ENCODE measurements at regions of chr5 and their contacts with region 1.

Region 1: GRCh38 chr5:102801371-102801770 is 46.3 kb downstream of the PAM start:
- DNase-seq: peak; percentile 20
- H3K4me3 Mint-ChIP-seq: no peak overlapping the region
- H3K27ac Mint-ChIP-seq: peak overlapping the region; percentile 14
- H3K4me1 Mint-ChIP-seq: peaks cover 49% of the 10 kb centered on the region
- H3K27me3 Mint-ChIP-seq: no peaks in the 10 kb centered on the region

Region 2: DNA sequence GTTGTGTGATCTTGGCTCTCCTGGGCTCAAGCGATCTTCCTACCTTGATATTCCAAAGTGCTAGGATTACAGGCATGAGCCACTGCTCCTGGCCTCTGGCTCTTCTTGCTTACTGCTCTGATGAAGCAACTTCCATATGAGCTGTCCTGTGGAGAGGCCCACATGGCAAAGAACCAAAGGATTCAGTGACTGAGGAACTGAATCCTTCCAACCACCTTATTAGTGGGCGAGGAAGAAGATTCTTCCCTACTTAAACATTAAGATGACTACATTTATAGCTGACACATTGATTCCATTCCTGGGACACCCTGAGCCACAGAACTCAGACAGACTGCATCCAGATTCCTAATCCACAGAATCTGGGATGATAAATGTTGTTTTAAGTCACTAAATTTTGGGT is 488.8 kb before region 1 on chr5:
- intact Hi-C with region 1: no loop called
- DNase-seq: no peak
- H3K4me3 Mint-ChIP-seq: no peak overlapping the region
- H3K27ac Mint-ChIP-seq: no peak overlapping the region
- H3K4me1 Mint-ChIP-seq: no peaks in the 10 kb centered on the region
- H3K27me3 Mint-ChIP-seq: no peaks in the 10 kb centered on the region

Region 3: DNA sequence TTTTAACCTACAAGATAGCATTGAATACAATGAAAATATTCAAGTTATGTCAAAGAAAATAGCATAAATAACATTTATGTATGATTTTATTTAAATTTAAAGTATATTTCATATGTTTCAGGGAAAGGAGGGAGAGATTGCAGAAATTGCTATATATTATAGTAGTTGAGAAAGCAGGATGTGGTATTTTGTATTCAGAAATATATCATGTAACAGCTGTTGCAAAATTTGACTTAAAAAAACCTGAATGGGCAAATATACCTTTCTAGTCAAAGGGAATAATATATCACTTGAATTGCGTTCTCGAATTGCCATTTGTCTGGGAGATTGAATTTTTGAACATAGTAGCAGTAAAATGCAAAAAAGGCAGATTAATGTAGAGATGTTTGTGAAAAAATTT is 34.3 kb after region 1 on chr5:
- intact Hi-C with region 1: loop called (anchors 5 kb)
- DNase-seq: no peak
- H3K4me3 Mint-ChIP-seq: no peak overlapping the region
- H3K27ac Mint-ChIP-seq: no peak overlapping the region
- H3K4me1 Mint-ChIP-seq: peaks cover 42% of the 10 kb centered on the region
- H3K27me3 Mint-ChIP-seq: no peaks in the 10 kb centered on the region

Region 4: DNA sequence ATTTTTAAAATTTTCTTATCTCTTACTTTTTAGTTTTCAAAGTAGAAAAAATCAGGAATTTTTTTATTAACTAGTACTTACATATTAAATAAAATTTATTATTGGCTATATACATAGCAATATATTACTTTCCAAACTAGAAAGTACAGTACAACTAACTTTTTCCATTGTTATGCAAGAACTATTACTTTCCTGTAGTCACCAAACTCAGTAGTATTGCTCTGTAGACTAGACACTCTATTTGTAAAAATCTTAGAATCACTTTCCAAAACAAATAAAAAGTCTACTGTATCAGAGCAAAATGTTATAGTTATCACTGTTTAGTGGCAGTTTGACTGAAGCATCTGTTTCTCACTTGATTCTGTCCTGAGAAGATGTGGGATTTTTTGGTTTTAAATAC is 401.9 kb after region 1 on chr5:
- intact Hi-C with region 1: no loop called
- DNase-seq: no peak
- H3K4me3 Mint-ChIP-seq: no peak overlapping the region
- H3K27ac Mint-ChIP-seq: no peak overlapping the region
- H3K4me1 Mint-ChIP-seq: peaks cover 16% of the 10 kb centered on the region
- H3K27me3 Mint-ChIP-seq: no peaks in the 10 kb centered on the region